ENCODE measurements at regions of chr3 and their contacts with region 1.

Region 1: GRCh38 chr3:47802734-47803477 is at the start of gene DHX30:
- DNase-seq: peak; percentile 81
- H3K4me3 Mint-ChIP-seq: peak within 1 kb of the TSS; percentile 97
- H3K27ac Mint-ChIP-seq: peak within 1 kb of the TSS; percentile 95
- H3K4me1 Mint-ChIP-seq: peaks cover 13% of the 10 kb centered on the region
- H3K27me3 Mint-ChIP-seq: no peaks in the 10 kb centered on the region
- total RNA-seq, gene DHX30: 123 and 126 TPM in 2 replicates

Region 2: DNA sequence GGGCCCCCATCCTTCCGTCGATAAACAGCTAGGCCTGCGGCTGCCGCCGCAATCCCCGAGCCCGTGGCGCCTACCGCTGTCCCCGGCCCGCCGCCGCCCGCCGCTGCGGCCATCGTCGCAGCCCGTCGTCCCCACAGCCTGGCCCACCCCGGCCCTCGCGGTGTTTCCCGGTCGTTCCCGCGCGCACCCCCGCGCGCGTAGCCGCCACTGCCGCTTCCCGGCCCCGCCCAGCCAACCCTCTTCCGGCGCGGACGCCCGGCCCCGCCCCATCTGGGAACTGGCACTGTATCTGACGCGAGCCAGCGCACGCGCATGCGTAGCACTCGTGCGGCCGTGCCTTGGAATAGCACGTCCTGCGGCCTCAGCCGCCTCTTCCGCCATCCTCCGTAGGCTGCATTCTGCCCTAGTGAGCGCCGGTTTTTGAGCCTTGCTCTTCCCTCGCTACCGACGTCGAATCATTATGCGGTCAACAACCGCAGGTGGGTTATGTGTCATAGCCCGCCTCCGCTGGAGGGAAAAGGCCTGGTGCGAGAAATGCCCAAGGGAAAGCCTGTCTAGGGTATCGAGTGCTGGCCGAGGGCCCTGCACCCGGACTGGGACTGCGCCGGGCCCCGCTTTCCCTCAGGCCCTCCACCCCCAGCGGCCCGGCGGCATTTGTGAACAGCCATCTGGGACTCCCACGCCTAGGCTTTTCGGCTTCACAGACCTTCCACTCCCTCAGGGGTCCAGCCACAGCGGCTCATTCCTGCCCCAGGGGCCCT is 21.0 kb before region 1 on chr3 and contains the start of gene SMARCC1:
- intact Hi-C with region 1: loop called (anchors 1 kb)
- DNase-seq: peak; percentile 99
- H3K4me3 Mint-ChIP-seq: peak within 1 kb of the TSS; percentile 92
- H3K27ac Mint-ChIP-seq: peak within 1 kb of the TSS; percentile 99
- H3K4me1 Mint-ChIP-seq: peaks cover 17% of the 10 kb centered on the region
- H3K27me3 Mint-ChIP-seq: no peaks in the 10 kb centered on the region
- total RNA-seq, gene SMARCC1: 150 and 166 TPM in 2 replicates